ENCODE measurements at regions of chr13 and their contacts with region 1.

Region 1: GRCh38 chr13:77742801-77743200 is 45.3 kb downstream of the SLAIN1 start:
- DNase-seq: no peak

Region 2: GRCh38 chr13:76886292-76887075 is 856.3 kb before region 1 on chr13 and contains the start of gene KCTD12:
- intact Hi-C with region 1: no loop called
- DNase-seq: peak; percentile 54 to 96 (median 68)

Region 3: GRCh38 chr13:77697217-77698103 is 45.3 kb before region 1 on chr13 and contains the start of gene SLAIN1:
- intact Hi-C with region 1: loop called (anchors 2 kb)
- DNase-seq: peak; percentile 83 to 98 (median 90)